Panc1 (cell line): ENCODE measurements at regions of chr10 and their contacts with region 1.

Region 1: GRCh38 chr10:73886085-73886529 is 11.8 kb upstream of the CAMK2G start:
- DNase-seq: peak; percentile 72
- ATAC-seq: peak; percentile 83
- H3K4me3 ChIP-seq: no peak overlapping the region
- H3K27ac ChIP-seq: peak overlapping the region; percentile 98
- H3K4me1 ChIP-seq: peaks cover 32% of the 10 kb centered on the region
- H3K27me3 ChIP-seq: no peaks in the 10 kb centered on the region
- CTCF ChIP-seq: peak; percentile 92

Region 2: DNA sequence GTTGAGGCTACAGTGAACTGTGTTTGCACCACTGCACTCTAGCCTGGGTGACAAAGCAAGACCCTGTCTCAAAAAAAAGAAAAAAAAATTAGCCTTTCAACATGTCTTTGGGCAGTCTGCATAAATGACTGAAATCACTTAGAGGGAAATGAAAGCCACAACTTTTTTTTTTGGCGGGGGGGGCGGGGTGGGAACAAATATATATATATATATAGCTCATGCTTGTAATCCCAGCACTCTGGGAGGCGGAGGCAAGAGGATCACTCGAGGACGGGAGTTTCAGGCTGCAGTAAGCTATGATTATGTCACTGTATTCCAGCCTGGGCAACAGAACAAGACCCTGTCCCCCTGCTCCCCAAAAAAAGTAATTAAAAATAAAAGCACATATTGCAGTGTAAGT is 1236.8 kb before region 1 on chr10:
- CTCF ChIA-PET with region 1: no interaction called
- POLR2A ChIA-PET with region 1: no interaction called
- in situ Hi-C with region 1: no loop called
- intact Hi-C with region 1: no loop called
- DNase-seq: no peak
- ATAC-seq: no peak
- H3K4me3 ChIP-seq: no peak overlapping the region
- H3K27ac ChIP-seq: no peak overlapping the region
- H3K4me1 ChIP-seq: no peaks in the 10 kb centered on the region
- H3K27me3 ChIP-seq: no peaks in the 10 kb centered on the region; the same call in 1 of the 2 replicates
- CTCF ChIP-seq: no peak

Region 3: DNA sequence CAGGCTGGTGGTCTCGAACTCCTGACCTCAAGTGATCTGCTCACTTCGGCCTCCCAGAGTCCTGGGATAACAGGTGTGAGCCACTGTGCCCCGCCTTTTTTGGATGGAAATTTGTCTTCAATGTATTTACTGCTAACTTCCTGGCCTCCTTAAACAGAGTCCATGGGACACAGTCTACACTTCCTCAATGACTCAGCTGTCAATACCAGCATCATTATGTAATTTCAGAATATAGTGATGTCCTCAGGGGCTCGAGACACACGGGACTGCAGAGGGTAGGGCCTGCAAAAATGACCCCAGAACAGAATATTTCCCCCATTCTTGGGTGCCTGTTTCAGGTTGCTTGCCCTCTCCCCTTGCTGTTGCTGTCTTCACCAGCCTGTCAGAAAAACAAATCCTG is 42.8 kb before region 1 on chr10:
- CTCF ChIA-PET with region 1: no interaction called
- POLR2A ChIA-PET with region 1: no interaction called
- in situ Hi-C with region 1: no loop called
- intact Hi-C with region 1: no loop called
- DNase-seq: no peak
- ATAC-seq: no peak
- H3K4me3 ChIP-seq: no peak overlapping the region
- H3K27ac ChIP-seq: no peak overlapping the region
- H3K4me1 ChIP-seq: no peaks in the 10 kb centered on the region
- H3K27me3 ChIP-seq: no peaks in the 10 kb centered on the region
- CTCF ChIP-seq: no peak

Region 4: DNA sequence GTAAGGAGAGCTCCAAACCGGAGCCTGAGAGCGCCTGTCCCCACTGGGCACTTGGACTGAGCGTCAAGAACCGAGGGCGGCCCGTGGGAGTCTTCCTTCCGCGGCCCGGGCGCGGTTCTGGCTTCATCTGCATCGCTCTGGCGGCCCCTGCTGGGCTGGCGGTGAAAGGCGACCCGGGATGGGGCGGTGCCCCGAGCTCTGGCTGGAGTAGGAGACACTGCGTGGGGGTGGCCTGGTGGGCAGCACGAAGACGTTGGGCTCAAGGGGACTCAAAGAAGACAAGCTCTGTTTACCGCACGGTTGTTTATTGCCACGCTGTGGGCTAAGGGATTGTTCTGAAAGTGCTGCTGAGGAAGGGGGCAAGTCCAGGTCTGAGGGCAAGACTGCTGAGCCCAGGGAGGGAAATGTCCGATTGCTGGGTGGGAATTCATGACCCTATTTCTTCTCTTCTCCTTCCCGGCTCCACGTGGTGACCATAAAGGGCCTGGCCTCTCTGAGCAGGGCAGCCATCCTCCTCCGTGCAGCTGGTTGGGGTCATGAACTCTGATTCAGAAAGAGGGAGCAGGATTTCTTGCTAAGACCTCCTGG is 54.6 kb after region 1 on chr10:
- CTCF ChIA-PET with region 1: interaction called, 50 read pairs
- POLR2A ChIA-PET with region 1: interaction called, 5 read pairs
- in situ Hi-C with region 1: no loop called
- intact Hi-C with region 1: loop called (anchors 1 kb)
- DNase-seq: no peak
- ATAC-seq: peak; percentile 98
- H3K4me3 ChIP-seq: peak overlapping the region; percentile 2 to 47; a peak in 2 of 4 replicates
- H3K27ac ChIP-seq: peak overlapping the region; percentile 92
- H3K4me1 ChIP-seq: peaks cover 14% of the 10 kb centered on the region
- H3K27me3 ChIP-seq: no peaks in the 10 kb centered on the region
- CTCF ChIP-seq: peak; percentile 99

Region 5: GRCh38 chr10:73997787-73998622 is 111.9 kb after region 1 on chr10 and contains the start of gene VCL:
- CTCF ChIA-PET with region 1: interaction called, 6 read pairs
- POLR2A ChIA-PET with region 1: interaction called, 10 read pairs
- in situ Hi-C with region 1: no loop called
- intact Hi-C with region 1: no loop called
- DNase-seq: no peak
- ATAC-seq: peak; percentile 93
- H3K4me3 ChIP-seq: peak within 1 kb of the TSS; percentile 69 to 95
- H3K27ac ChIP-seq: peak within 1 kb of the TSS; percentile 98
- H3K4me1 ChIP-seq: peaks cover 43% of the 10 kb centered on the region
- H3K27me3 ChIP-seq: no peaks in the 10 kb centered on the region
- CTCF ChIP-seq: no peak
- total RNA-seq, gene VCL: 495 TPM

Region 6: DNA sequence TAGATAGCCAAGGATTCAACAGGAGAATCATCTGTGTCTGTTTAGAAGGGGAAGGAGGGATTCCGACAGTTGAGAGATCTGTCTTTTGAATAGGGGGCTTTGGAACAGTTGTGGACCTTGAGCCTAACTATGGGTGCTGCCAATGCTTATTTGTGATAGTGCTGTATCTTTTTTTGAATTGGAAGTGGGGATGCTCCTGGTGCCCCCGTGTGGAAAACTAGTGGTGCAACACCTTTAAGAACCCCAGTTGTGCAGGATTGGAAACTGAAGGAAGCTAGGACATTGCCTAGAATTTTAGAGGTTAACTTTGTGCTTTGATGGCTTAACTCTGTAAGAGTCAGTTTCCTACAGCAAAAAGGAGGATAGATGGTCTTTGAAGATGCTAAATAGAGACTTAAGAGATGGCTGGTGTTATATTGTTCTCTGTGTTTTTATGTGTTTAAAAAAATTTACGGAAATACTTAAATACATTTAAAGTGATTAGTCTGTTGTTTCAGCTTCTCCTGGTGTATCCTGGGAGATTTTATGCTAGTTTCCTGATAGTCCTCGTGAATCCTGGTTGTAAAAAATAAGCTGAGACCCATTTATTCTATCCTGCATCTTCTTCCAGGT is 195.2 kb after region 1 on chr10:
- CTCF ChIA-PET with region 1: interaction called, 13 read pairs
- POLR2A ChIA-PET with region 1: no interaction called
- in situ Hi-C with region 1: no loop called
- intact Hi-C with region 1: loop called (anchors 2 kb)
- DNase-seq: peak; percentile 57
- ATAC-seq: peak; percentile 49
- H3K4me3 ChIP-seq: no peak overlapping the region
- H3K27ac ChIP-seq: no peak overlapping the region
- H3K4me1 ChIP-seq: peaks cover 42% of the 10 kb centered on the region
- H3K27me3 ChIP-seq: no peaks in the 10 kb centered on the region
- CTCF ChIP-seq: peak; percentile 90